ENCODE measurements at regions of chr19 and their contacts with region 1.

Region 1: DNA sequence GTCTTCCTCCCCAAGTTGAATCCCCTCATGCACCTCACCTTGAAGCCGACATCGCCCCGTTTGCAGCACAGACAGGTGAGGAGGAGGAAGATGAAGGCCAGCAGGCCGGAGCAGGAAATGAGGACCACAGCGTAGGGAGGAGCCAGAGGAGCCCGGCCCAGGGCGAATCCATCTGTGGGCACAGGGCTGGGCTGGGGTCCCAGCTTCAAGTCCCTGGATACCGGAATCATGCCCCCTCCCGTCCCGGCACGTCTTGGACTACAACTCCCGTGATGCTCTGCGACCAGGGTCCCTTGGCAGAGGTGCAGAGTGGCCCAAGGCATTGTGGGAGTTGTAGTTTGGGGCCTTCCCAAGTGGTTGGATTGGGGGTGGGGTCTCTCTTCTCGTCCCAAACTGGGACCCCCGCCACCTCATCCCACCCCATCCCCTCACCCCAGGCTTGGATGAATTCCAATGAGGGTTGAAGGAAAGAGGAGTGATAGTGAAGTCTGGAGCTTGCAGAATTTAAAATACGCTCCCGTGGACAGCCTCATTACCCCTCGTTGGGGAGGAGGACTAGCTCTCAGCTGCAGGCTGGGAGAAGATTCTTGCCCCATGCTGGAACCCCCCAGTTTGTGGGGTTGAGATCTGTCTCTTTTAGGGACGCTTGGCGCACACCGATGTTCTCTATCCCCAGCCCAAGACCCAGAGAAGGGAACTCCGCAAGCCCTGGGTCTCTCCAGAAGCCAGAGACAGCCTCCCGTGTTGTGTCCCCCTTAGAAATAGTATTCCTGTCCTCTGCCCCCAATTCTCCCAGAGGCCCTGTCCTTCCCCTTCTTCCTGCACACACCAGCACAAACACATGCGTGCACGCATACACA is 984 bp downstream of the LMTK3 start:
- DNase-seq: no peak
- ATAC-seq: peak; percentile 40
- H3K4me3 ChIP-seq: no peak overlapping the region
- H3K27ac ChIP-seq: no peak overlapping the region
- H3K4me1 ChIP-seq: peaks cover 0 to 19% of the 10 kb centered on the region in 2 experiments; a peak in 2 of 4 replicates
- H3K27me3 ChIP-seq: no peaks in the 10 kb centered on the region
- CTCF ChIP-seq: no peak
- POLR2A ChIP-seq: no peak
- RAD21 ChIP-seq: no peak

Region 2: DNA sequence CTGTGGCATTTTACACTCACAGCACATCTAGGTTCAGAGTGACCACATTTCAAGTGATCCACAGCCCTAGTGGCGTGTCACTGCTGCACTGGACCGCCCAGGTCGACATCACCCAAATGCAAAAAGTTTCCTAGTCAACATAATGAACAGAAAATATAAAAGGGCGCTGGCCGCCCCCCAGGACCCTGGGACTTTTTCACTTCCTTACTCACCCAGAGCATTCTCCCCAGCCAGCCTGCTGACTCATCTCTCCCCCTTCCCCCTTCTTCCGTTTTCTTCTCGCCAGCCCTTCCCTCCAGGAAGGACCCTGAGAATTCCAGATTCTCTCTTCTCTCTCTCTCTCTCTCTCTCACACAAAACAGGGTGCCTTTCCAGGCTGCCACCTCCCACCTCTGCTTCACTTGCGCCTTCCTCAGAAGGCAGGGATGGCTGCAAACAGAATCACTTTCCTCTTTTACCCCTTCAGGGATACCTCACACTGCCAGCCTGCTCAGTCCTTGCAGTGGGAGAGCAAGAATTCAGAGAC is 85.9 kb before region 1 on chr19:
- CTCF ChIA-PET with region 1: no interaction called
- POLR2A ChIA-PET with region 1: no interaction called
- RAD21 ChIA-PET with region 1: no interaction called
- intact Hi-C with region 1: no loop called
- DNase-seq: no peak
- ATAC-seq: peak; percentile 55
- H3K4me3 ChIP-seq: no peak overlapping the region
- H3K27ac ChIP-seq: peak overlapping the region; percentile 59; the same call in 1 of the 2 replicates
- H3K4me1 ChIP-seq: peaks cover 7 to 11% of the 10 kb centered on the region in 2 experiments
- H3K27me3 ChIP-seq: no peaks in the 10 kb centered on the region
- CTCF ChIP-seq: no peak
- POLR2A ChIP-seq: no peak
- RAD21 ChIP-seq: no peak

Region 3: GRCh38 chr19:48524728-48525127 is 14.1 kb after region 1 on chr19:
- CTCF ChIA-PET with region 1: no interaction called
- POLR2A ChIA-PET with region 1: no interaction called
- RAD21 ChIA-PET with region 1: no interaction called
- intact Hi-C with region 1: no loop called
- DNase-seq: no peak
- ATAC-seq: no peak
- H3K4me3 ChIP-seq: no peak overlapping the region
- H3K27ac ChIP-seq: no peak overlapping the region
- H3K4me1 ChIP-seq: peaks cover 5 to 9% of the 10 kb centered on the region in 2 experiments; a peak in 3 of 4 replicates
- H3K27me3 ChIP-seq: no peaks in the 10 kb centered on the region
- CTCF ChIP-seq: no peak
- POLR2A ChIP-seq: no peak
- RAD21 ChIP-seq: no peak

Region 4: GRCh38 chr19:48582168-48582567 is 71.5 kb after region 1 on chr19:
- CTCF ChIA-PET with region 1: interaction called, 276 read pairs
- POLR2A ChIA-PET with region 1: interaction called, 11 read pairs
- RAD21 ChIA-PET with region 1: interaction called, 34 to 75 read pairs
- intact Hi-C with region 1: loop called (anchors 1 kb)
- DNase-seq: no peak
- ATAC-seq: no peak
- H3K4me3 ChIP-seq: no peak overlapping the region
- H3K27ac ChIP-seq: no peak overlapping the region
- H3K4me1 ChIP-seq: peaks cover 8 to 15% of the 10 kb centered on the region in 2 experiments
- H3K27me3 ChIP-seq: no peaks in the 10 kb centered on the region
- CTCF ChIP-seq: no peak
- POLR2A ChIP-seq: no peak
- RAD21 ChIP-seq: no peak

Region 5: GRCh38 chr19:48608798-48609263 is 98.2 kb after region 1 on chr19:
- CTCF ChIA-PET with region 1: interaction called, 16 read pairs
- POLR2A ChIA-PET with region 1: interaction called, 5 read pairs
- RAD21 ChIA-PET with region 1: interaction called, 4 to 7 read pairs
- intact Hi-C with region 1: no loop called
- DNase-seq: peak; percentile 66
- ATAC-seq: peak; percentile 92
- H3K4me3 ChIP-seq: peak overlapping the region; percentile 22 to 50
- H3K27ac ChIP-seq: peak overlapping the region; percentile 10; the same call in 1 of the 2 replicates
- H3K4me1 ChIP-seq: peaks cover 5 to 13% of the 10 kb centered on the region in 2 experiments; a peak in 3 of 4 replicates
- H3K27me3 ChIP-seq: no peaks in the 10 kb centered on the region
- CTCF ChIP-seq: peak; percentile 77 to 80 (median 77)
- POLR2A ChIP-seq: no peak
- RAD21 ChIP-seq: peak; percentile 92